ENCODE measurements at regions of chr4 and their contacts with region 1.

Region 1: GRCh38 chr4:48127682-48128394 is 6.2 kb downstream of the TXK start:
- DNase-seq: peak; percentile 95
- H3K4me3 Mint-ChIP-seq: peak overlapping the region; percentile 51
- H3K27ac Mint-ChIP-seq: peak overlapping the region; percentile 99
- H3K4me1 Mint-ChIP-seq: peaks cover 80% of the 10 kb centered on the region
- H3K27me3 Mint-ChIP-seq: no peaks in the 10 kb centered on the region

Region 2: GRCh38 chr4:47836641-47837093 is 291.2 kb before region 1 on chr4:
- CTCF ChIA-PET with region 1: interaction called, 3 read pairs
- intact Hi-C with region 1: loop called (anchors 2 kb)
- DNase-seq: peak; percentile 74
- H3K4me3 Mint-ChIP-seq: peak overlapping the region; percentile 78
- H3K27ac Mint-ChIP-seq: no peak overlapping the region
- H3K4me1 Mint-ChIP-seq: peaks cover 25% of the 10 kb centered on the region
- H3K27me3 Mint-ChIP-seq: peaks cover 5% of the 10 kb centered on the region

Region 3: GRCh38 chr4:48047421-48047844 is 80.4 kb before region 1 on chr4:
- CTCF ChIA-PET with region 1: interaction called, 5 read pairs
- intact Hi-C with region 1: loop called (anchors 1 kb)
- DNase-seq: peak; percentile 91
- H3K4me3 Mint-ChIP-seq: peak overlapping the region; percentile 1
- H3K27ac Mint-ChIP-seq: no peak overlapping the region
- H3K4me1 Mint-ChIP-seq: peaks cover 58% of the 10 kb centered on the region
- H3K27me3 Mint-ChIP-seq: no peaks in the 10 kb centered on the region

Region 4: DNA sequence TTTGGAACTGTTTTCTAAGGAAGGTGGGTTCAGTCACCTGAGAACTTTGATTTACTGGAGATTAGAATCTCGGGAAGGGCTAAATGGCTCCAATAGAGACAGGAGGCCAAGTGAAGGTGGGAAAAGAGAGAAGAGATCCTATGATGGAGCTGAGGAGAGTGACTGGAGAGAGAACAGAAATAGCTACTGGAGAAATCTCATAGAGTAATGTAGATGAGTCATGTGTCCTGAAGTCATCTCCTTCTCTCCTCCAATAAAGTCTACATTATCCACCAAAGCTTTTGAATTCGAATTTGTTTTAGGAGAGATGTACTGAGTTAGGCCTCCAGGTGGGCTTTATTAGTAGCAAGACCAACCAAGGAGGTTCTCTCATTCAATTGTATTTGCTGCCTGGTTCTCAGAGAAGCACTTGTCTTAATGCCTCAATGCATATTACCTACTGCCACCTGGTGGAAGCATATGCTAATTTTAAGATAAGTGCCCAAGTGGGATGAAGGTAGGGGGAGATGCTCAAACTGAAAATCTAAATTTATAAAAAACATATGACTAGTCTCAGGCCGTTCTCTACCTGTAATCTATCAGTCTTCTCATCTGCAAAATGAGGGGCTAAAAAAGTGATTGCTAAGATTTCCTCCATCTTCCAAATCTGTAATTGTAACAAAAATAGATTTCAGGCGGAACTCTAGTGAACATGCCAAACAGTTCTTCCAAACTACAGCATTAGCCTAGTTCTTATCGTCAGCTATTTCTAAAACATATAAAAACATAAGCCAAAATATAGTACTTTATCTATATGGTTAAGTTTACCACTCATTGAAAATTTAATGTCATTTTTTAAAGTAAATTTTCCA is 18.2 kb before region 1 on chr4:
- CTCF ChIA-PET with region 1: interaction called, 45 read pairs
- intact Hi-C with region 1: no loop called
- DNase-seq: no peak
- H3K4me3 Mint-ChIP-seq: no peak overlapping the region
- H3K27ac Mint-ChIP-seq: peak overlapping the region; percentile 75
- H3K4me1 Mint-ChIP-seq: peaks cover 63% of the 10 kb centered on the region
- H3K27me3 Mint-ChIP-seq: no peaks in the 10 kb centered on the region

Region 5: GRCh38 chr4:48275247-48275646 is 147.4 kb after region 1 on chr4:
- CTCF ChIA-PET with region 1: interaction called, 12 read pairs
- intact Hi-C with region 1: loop called (anchors 1 kb)
- DNase-seq: peak; percentile 22
- H3K4me3 Mint-ChIP-seq: no peak overlapping the region
- H3K27ac Mint-ChIP-seq: no peak overlapping the region
- H3K4me1 Mint-ChIP-seq: peaks cover 10% of the 10 kb centered on the region
- H3K27me3 Mint-ChIP-seq: peaks cover 6% of the 10 kb centered on the region

Region 6: GRCh38 chr4:48546336-48546735 is 418.5 kb after region 1 on chr4:
- CTCF ChIA-PET with region 1: no interaction called
- intact Hi-C with region 1: loop called (anchors 5 kb)
- DNase-seq: peak; percentile 63
- H3K4me3 Mint-ChIP-seq: no peak overlapping the region
- H3K27ac Mint-ChIP-seq: no peak overlapping the region
- H3K4me1 Mint-ChIP-seq: no peaks in the 10 kb centered on the region
- H3K27me3 Mint-ChIP-seq: no peaks in the 10 kb centered on the region

Region 7: DNA sequence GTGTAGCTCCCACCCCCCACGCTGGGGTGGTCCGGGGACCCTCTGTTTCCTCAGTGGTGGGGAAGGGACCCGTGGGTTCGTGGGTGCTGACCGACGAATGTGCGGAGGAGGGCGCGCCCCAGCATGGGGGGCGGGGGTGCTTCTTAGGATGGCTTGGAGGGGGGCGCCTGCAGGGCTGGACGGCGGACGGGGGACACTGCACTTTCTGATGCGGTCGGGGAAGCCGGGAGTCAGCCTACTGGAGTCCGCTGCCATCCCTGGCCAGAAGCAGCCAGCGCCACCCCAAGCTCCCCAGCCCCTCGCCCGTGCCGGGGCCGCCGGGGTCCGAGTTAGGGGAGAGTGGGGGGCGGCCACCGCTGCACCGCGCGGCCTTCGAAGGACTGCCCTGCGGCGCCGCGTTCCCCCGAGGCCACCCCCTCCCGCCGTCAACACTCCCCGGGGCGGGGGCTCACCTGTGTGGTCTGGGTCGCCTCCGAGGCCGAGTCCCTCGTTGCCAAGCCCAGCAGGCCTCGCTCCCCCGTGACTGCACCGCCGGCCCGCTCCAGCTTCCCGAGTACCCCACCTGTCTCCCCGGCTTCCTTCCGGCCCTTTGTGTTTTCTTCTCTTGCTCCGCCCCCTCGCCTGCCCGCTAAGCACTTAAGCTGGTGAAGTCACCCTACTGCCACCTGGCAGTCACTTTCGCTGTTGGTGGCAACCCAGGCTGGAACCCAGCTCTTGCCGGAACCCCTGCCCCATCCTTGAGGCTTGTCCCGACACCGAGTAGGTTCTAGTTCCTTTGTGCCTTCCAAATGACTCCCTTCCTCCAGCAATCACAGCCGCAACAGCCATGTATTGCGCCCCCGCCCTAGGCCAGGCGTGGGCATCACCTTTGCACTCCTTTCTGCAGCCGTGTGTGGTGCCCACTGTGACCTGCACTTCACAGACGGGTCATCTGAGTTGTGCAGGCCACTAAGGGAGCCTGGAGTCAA is 778.7 kb after region 1 on chr4 and contains the start of gene OCIAD2:
- CTCF ChIA-PET with region 1: no interaction called
- intact Hi-C with region 1: loop called (anchors 2 kb)
- DNase-seq: peak; percentile 90
- H3K4me3 Mint-ChIP-seq: peak within 1 kb of the TSS; percentile 89
- H3K27ac Mint-ChIP-seq: peak within 1 kb of the TSS; percentile 90
- H3K4me1 Mint-ChIP-seq: peaks cover 56% of the 10 kb centered on the region
- H3K27me3 Mint-ChIP-seq: no peaks in the 10 kb centered on the region
- total RNA-seq, gene OCIAD2: 59.7 to 76.9 TPM

Measured in activated naive CD4-positive, alpha-beta T cell treated with anti-CD3 and anti-CD28 coated beads for 36 hours (primary cell).